Dorsolateral prefrontal cortex (tissue), 120 donors: ENCODE measurements at regions of chr10 and their contacts with region 1.

Region 1: GRCh38 chr10:127577376-127577775 is 28.3 kb downstream of the NPS start:
- DNase-seq: no peak
- H3K4me3 ChIP-seq: peak overlapping the region in 1 of 59 donors; percentile 19
- H3K27ac ChIP-seq: peak overlapping the region in 45 of 59 donors; percentile 0 to 78 (median 46)
- H3K27me3 ChIP-seq: no peaks in the 10 kb centered on the region
- CTCF ChIP-seq: peak; percentile 15 to 73 (median 48)

Region 2: DNA sequence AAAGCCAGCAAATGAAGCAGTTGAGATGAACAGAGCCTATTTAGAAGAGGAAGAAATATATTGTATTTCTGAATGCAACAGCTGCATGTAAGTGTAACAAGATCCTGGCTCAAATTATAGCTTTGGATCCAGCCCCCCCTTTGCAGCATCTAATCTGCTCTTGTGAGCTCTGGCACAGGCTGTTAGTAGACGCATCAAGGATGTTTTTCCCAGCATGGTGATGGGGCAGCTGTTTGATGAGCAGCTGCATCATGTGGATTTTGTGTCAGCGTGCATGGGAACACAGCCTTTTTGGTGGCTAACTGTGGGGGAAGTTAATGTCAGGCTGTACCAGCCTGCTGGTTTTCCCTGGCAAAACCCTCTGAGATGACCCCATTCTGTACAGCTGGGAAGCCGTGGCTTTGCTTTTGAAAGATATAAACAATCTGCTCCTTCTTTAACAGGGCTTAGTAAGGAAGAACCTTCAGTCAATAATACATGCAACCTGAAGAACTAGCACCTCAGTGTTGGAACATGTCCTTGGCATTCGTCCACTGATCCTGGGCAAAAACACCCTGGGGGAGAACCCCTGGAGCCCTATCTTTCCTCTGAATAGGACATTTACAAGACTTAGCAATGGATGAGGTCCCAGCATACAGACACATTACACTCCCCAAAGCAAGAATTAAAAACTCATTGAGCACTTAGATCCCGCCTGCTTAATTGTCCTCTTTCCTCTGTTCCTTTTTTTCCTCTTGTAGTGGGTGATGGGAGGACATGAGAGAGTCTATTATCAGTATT is 42.4 kb after region 1 on chr10:
- intact Hi-C with region 1: loop called in 1 of 2 experiments (anchors 5 kb)
- DNase-seq: peak; percentile 16 to 96 (median 85)
- H3K4me3 ChIP-seq: peak overlapping the region in 2 of 59 donors; percentile 5 to 29
- H3K27ac ChIP-seq: peak overlapping the region; percentile 66 to 99 (median 96)
- H3K27me3 ChIP-seq: peaks cover 0 to 6% (median 0%) of the 10 kb centered on the region in 45 donors
- CTCF ChIP-seq: peak in 3 of 56 donors; percentile 3 to 30 (median 17)